ENCODE measurements at regions of chr4 and their contacts with region 1.

Region 1: DNA sequence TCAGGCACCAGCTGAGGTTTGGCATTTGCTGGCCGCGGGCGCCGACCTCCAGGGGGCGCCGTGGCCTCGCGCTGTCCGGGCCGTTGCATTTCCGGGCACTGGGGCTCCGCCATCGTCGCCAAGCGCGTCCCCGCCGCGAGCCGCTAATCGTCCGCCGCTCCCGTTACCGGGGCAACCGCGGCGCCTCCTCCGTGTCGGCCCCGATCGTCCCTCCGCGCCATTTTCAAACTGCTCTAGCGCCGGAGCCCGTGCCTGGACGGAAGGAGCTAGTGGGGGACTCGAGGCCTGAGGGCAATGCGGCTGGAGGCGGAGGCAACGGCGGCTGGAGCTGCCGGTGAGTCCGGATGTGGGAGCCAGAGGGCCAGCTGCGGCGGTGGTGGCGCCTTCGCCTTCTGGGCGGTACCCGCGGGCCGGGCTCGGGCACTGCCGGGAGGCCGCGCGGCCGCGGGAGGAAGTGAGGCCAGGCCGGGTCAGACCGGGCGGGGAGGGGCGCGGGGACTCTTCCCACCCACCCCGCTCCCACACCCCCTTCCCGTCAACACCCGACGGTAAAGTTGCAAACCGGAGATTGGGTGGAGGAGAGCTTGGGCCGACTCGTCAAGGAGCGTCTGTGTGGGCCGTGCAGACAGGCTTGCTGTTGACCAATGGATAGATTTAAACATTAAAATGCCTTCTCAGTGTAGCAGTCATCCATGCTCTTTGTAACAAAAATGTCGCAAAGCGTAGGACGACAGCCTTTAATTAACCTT is at the start of gene CEP135:
- DNase-seq: peak; percentile 94
- H3K4me3 Mint-ChIP-seq: peak within 1 kb of the TSS; percentile 91
- H3K27ac Mint-ChIP-seq: peak within 1 kb of the TSS; percentile 94
- H3K4me1 Mint-ChIP-seq: peaks cover 35% of the 10 kb centered on the region
- H3K27me3 Mint-ChIP-seq: no peaks in the 10 kb centered on the region
- total RNA-seq, gene CEP135: 18.6 to 19.4 TPM

Region 2: DNA sequence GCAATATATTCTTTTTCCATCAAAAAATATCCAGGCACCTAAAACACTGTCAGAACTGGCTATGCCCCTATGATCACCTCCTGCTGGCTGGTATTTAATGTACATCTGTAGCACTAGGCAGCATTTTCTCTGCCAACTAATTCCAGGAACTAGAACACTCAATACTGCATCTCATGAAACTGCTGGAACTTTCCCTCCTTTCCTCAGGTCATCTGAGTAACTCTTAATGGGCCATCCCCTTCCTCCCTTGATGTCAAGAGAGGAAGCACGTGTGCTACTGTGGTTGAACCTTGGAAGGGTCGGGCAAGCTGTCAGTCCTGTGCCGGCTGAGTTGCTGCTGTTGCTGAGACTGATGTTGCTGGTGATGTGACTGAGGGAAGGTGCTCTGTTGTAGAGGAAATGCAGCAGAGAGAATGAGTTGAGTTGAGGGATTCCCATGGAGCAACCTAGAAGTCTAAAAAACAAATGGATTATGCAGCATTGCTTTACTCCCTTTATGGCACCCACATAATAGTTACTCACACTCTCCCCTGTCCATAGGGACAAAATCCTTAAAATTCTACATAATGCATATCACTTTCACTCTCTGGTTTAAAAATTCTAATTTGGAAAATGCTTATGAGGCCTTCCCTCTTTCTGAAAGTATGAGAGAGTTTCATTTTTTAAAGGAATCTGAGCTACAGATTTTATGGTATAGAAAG is 513.6 kb before region 1 on chr4:
- CTCF ChIA-PET with region 1: no interaction called
- intact Hi-C with region 1: loop called (anchors 2 kb)
- DNase-seq: peak; percentile 68
- H3K4me3 Mint-ChIP-seq: no peak overlapping the region
- H3K27ac Mint-ChIP-seq: peak overlapping the region; percentile 37
- H3K4me1 Mint-ChIP-seq: peaks cover 16% of the 10 kb centered on the region
- H3K27me3 Mint-ChIP-seq: no peaks in the 10 kb centered on the region

Region 3: DNA sequence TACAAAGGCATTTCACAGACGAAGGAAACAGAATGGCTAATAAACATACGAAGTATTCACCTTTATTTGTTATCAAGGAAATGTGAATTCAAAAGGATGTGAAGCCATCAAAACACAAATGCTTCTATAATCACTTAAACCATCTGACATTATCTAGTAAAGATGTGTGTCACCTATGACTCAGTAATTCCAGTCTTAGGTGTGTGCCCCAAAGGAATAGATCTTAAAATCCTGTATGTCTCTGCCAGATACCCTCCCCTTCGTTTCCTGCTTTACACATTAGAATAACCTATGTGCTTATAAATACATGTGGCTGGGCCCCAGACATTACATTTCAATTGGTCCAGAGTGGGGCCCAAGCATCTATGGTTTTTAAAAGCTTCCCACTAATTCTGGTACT is 41.9 kb before region 1 on chr4:
- CTCF ChIA-PET with region 1: interaction called, 8 read pairs
- intact Hi-C with region 1: loop called (anchors 1 kb)
- DNase-seq: peak; percentile 30
- H3K4me3 Mint-ChIP-seq: no peak overlapping the region
- H3K27ac Mint-ChIP-seq: peak overlapping the region; percentile 69
- H3K4me1 Mint-ChIP-seq: peaks cover 31% of the 10 kb centered on the region
- H3K27me3 Mint-ChIP-seq: no peaks in the 10 kb centered on the region

Region 4: GRCh38 chr4:56129431-56129861 is 180.5 kb after region 1 on chr4:
- CTCF ChIA-PET with region 1: no interaction called
- intact Hi-C with region 1: loop called (anchors 1 kb)
- DNase-seq: peak; percentile 47
- H3K4me3 Mint-ChIP-seq: no peak overlapping the region
- H3K27ac Mint-ChIP-seq: no peak overlapping the region
- H3K4me1 Mint-ChIP-seq: no peaks in the 10 kb centered on the region
- H3K27me3 Mint-ChIP-seq: peaks cover 2% of the 10 kb centered on the region

Region 5: GRCh38 chr4:56195025-56195424 is 246.1 kb after region 1 on chr4:
- CTCF ChIA-PET with region 1: no interaction called
- intact Hi-C with region 1: no loop called
- DNase-seq: no peak
- H3K4me3 Mint-ChIP-seq: no peak overlapping the region
- H3K27ac Mint-ChIP-seq: no peak overlapping the region
- H3K4me1 Mint-ChIP-seq: no peaks in the 10 kb centered on the region
- H3K27me3 Mint-ChIP-seq: peaks cover 11% of the 10 kb centered on the region

Region 6: GRCh38 chr4:56467284-56468096 is 518.6 kb after region 1 on chr4 and contains the start of gene SRP72:
- CTCF ChIA-PET with region 1: no interaction called
- intact Hi-C with region 1: loop called (anchors 5 kb)
- DNase-seq: peak; percentile 91
- H3K4me3 Mint-ChIP-seq: peak within 1 kb of the TSS; percentile 100
- H3K27ac Mint-ChIP-seq: peak within 1 kb of the TSS; percentile 97
- H3K4me1 Mint-ChIP-seq: peaks cover 33% of the 10 kb centered on the region
- H3K27me3 Mint-ChIP-seq: no peaks in the 10 kb centered on the region
- total RNA-seq, gene SRP72: 200 to 212 TPM

Region 7: DNA sequence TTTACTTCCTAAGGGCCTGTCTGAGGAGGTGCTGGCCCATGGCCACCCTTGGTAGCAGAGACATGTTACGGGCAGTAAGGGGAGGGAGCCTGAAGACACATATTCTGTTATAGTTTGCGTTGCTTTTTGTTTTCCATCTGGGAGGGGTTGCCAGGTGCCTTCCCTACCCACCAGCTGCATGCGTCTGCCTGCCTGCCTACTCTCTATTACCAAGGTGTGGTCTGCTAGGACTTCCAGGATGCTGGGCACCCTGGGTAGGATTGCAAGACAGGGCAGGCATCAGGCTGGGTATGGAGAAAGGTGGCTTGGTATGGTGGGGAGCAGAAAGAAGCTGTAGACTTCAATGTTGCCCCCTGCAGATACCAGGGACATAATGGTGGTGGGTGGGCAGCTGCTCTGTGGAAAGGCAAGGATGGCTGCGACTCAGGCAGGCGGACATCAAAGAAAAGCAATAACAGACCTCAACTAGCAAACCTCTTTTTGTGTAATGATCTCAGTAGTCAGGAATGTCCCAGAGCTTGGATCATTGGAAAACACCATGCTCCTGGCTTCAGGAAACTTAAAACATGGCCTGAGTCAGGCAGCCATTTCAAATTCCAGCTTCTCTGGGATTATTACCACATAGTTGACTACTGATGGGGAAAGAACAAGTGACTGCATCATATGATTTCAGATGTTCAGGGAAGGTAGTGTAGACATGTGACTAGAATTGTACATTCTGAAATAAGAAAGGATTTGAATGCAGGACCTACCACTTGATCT is 664.4 kb after region 1 on chr4:
- CTCF ChIA-PET with region 1: no interaction called
- intact Hi-C with region 1: no loop called
- DNase-seq: no peak
- H3K4me3 Mint-ChIP-seq: no peak overlapping the region
- H3K27ac Mint-ChIP-seq: no peak overlapping the region
- H3K4me1 Mint-ChIP-seq: no peaks in the 10 kb centered on the region
- H3K27me3 Mint-ChIP-seq: peaks cover 8% of the 10 kb centered on the region

Region 8: GRCh38 chr4:56821381-56822243 is 872.7 kb after region 1 on chr4 and contains the start of gene SPINK2:
- CTCF ChIA-PET with region 1: no interaction called
- intact Hi-C with region 1: loop called (anchors 5 kb)
- DNase-seq: peak; percentile 75
- H3K4me3 Mint-ChIP-seq: peak within 1 kb of the TSS; percentile 74
- H3K27ac Mint-ChIP-seq: no peak within 1 kb of the TSS
- H3K4me1 Mint-ChIP-seq: peaks cover 25% of the 10 kb centered on the region
- H3K27me3 Mint-ChIP-seq: peaks cover 12% of the 10 kb centered on the region
- total RNA-seq, gene SPINK2: 0.83 to 1.4 TPM

Measured in activated naive CD4-positive, alpha-beta T cell treated with anti-CD3 and anti-CD28 coated beads for 36 hours (primary cell).